Heart left ventricle (tissue), 16 donors: ENCODE measurements at regions of chr10 and their contacts with region 1.

Region 1: DNA sequence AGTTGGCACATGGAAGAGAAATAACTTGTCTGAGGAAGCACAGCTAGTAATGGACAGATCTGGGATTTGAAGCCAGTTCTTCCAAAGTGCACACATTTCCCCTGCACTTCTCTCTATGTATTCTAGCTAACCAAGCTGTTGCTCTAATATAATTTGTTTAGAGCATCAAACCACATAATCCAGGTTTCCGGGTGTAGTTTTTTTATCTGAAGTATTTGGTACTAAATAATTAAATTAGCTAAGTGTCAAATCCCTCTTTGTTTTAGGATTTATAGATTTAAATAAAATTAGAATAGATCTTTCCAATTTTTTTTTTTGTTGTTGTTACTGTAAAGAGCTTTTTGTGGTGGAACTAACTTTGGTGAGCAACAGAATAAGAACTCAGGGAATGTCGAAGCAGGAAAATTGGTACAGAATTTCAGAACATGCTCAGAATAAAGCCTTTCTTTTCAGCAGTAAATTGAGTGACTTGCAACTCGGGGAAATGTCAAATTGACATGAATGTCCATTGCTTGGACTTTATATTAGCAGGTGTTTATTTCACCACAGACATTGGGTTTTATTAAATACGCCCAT is 33.7 kb downstream of the CAMK1D start:
- DNase-seq: no peak
- ATAC-seq: no peak
- H3K4me3 ChIP-seq: no peak overlapping the region
- H3K27ac ChIP-seq: no peak overlapping the region
- H3K4me1 ChIP-seq: no peaks in the 10 kb centered on the region
- H3K27me3 ChIP-seq: no peaks in the 10 kb centered on the region
- CTCF ChIP-seq: no peak
- POLR2A ChIP-seq: no peak

Region 2: DNA sequence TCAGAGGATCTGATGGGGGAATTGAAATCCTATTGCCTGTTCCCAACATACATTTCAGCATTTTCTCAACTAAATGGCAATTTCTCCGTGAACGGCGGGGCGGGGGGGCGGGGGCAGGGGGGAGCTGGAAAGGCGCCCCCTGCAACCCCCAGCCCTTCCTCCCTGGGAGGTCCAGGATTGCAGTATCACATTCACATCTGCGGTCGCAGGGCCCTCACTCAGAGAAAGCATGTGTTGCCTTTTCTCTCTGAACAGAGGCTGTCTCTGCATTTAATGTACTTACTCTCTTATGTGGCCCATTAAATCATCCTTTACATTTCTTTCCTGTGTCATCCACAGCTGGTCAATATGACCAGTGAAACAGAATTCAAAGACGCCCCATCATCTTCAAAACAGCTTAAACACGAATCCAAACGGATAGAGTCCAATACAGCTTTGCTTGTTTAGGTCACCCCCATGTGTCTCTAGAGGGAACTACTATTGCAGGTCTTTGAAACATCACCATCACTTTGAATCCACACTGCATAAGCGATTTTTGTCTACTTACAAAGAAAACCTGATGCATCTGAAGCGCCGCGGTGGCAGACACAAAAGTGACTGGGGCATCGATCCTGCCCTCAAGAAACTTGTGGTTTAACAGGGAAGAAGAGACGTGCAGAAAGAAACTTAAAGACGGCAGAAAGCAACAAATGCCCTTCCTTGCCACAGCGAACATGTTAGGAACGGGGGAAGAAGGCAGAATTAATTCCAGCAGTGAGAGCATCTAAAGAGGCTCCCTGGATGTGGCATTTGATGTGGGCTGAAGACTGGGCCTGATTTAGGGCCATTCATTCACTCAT is 657.9 kb before region 1 on chr10:
- intact Hi-C with region 1: no loop called
- DNase-seq: no peak
- ATAC-seq: peak in 3 of 4 donors; percentile 72 to 86 (median 85)
- H3K4me3 ChIP-seq: no peak overlapping the region
- H3K27ac ChIP-seq: no peak overlapping the region
- H3K4me1 ChIP-seq: peaks cover 0 to 5% (median 0%) of the 10 kb centered on the region in 12 donors
- H3K27me3 ChIP-seq: no peaks in the 10 kb centered on the region
- CTCF ChIP-seq: peak; percentile 59 to 79 (median 72)
- POLR2A ChIP-seq: no peak

Region 3: DNA sequence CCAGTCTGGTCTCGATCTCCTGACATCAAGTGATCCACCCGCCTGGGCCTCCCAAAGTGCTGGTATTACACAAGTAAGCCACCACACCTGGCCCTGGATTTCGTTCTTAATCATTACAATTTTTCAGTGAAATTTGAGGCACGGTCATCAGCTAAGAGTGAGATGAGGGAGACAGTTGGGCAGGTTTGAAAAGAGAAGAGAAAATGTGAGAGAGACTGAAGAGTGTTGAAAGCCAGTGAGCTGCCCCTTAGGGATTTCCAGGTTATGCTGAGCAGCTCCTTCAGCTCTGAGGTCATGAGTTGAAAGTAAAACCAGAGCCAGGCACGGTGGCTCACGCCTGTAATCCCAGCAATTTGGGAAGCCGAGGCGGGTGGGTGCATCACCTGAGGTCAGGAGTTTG is 334.5 kb before region 1 on chr10:
- intact Hi-C with region 1: no loop called
- DNase-seq: no peak
- ATAC-seq: no peak
- H3K4me3 ChIP-seq: no peak overlapping the region
- H3K27ac ChIP-seq: no peak overlapping the region
- H3K4me1 ChIP-seq: peaks cover 0 to 15% (median under 1%) of the 10 kb centered on the region in 12 donors
- H3K27me3 ChIP-seq: no peaks in the 10 kb centered on the region
- CTCF ChIP-seq: no peak
- POLR2A ChIP-seq: no peak

Region 4: GRCh38 chr10:12358863-12359564 is 24.0 kb before region 1 on chr10:
- intact Hi-C with region 1: loop called in 1 of 10 experiments (anchors 1 kb)
- DNase-seq: peak in 1 of 5 donors; percentile 33
- ATAC-seq: peak in 2 of 4 donors; percentile 36 to 63
- H3K4me3 ChIP-seq: no peak overlapping the region
- H3K27ac ChIP-seq: no peak overlapping the region
- H3K4me1 ChIP-seq: peaks cover 0 to 18% (median 0%) of the 10 kb centered on the region in 12 donors
- H3K27me3 ChIP-seq: no peaks in the 10 kb centered on the region
- CTCF ChIP-seq: no peak
- POLR2A ChIP-seq: no peak

Region 5: DNA sequence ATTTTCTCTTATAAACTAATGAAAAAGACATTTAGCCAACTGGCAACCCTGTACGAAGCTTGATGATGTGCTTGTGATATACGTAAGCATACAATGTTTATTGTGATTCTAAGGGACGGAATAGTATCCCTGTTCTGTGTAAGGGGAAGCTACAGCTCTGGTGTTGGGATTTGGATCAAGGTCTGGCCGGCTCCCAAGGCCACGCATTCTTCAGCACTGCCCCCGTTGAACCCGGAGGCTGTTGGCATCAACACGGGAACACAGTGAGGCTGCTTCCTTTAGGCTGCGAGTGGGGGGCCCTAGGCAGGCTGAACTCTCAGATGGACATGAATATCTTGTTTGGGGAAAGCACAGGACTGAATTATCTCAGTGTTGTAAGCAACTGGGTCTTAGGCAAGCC is 146.9 kb after region 1 on chr10:
- intact Hi-C with region 1: no loop called
- DNase-seq: no peak
- ATAC-seq: no peak
- H3K4me3 ChIP-seq: no peak overlapping the region
- H3K27ac ChIP-seq: no peak overlapping the region
- H3K4me1 ChIP-seq: no peaks in the 10 kb centered on the region
- H3K27me3 ChIP-seq: no peaks in the 10 kb centered on the region
- CTCF ChIP-seq: no peak
- POLR2A ChIP-seq: no peak

Region 6: DNA sequence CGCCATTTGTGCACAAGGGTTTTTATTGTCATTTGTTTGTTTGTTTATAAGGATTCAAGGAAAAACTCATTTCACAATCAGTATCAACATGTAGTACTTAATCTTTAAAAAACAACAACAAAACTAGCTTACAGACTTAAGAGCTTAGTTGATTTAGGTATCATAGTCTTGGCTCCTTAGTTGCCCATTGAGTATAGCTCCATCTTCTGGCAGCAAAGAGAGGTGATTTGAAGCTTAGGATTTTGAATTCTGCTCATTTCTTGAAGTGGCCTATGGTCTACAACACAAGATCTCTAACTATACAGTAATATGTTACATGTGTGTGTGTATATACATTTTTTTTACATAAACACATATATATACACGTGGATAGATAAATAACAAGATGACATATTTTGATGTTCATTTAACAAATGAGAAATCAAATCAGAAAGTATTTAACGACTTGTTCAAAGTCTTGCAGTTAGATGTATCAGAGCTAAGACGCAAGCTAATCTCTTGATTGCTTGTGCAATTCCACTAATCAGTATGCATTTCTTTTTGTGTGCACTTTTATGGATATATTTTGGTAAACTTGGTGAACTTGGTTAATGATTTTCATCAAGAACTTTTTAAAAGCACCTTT is 273.6 kb after region 1 on chr10:
- intact Hi-C with region 1: no loop called
- DNase-seq: no peak
- ATAC-seq: peak in 1 of 4 donors; percentile 45
- H3K4me3 ChIP-seq: no peak overlapping the region
- H3K27ac ChIP-seq: no peak overlapping the region
- H3K4me1 ChIP-seq: no peaks in the 10 kb centered on the region
- H3K27me3 ChIP-seq: no peaks in the 10 kb centered on the region
- CTCF ChIP-seq: peak; percentile 55 to 70 (median 63)
- POLR2A ChIP-seq: no peak